Heart left ventricle (tissue), 16 donors: ENCODE measurements at regions of chr22 and their contacts with region 1.

Region 1: DNA sequence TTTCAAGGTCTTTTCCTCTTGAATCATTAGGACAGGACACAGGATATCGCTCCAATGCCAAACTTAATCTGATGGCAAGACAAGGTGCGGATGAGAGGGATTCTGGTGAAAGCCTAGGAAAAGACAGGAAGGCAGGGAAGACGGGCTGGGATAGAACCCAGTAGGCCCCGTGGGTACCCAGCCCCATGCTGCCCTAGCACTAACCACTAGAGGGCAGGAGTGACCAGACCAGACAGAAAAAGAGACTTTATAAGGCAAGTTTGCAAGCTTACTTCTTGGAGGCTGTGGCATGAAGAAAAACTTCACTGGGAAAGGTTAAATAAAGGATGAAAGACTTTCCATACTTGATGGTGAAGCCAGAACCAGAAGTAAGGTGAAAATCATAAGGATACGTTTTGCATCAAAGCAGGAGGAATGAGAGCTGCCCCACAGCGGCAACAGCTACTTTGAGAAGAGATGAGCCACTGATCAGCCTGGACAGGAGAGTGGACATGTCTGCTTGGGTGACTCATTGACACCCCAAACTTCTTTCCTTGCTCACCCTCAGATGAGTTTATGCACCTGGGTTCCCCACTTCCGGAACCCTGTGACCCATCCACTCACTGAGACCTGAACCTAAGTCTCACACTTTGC is 39.8 kb downstream of the SYN3 start:
- DNase-seq: peak in 4 of 5 donors; percentile 39 to 53 (median 44)
- ATAC-seq: peak in 3 of 4 donors; percentile 67 to 83 (median 75)
- H3K4me3 ChIP-seq: no peak overlapping the region
- H3K27ac ChIP-seq: no peak overlapping the region
- H3K4me1 ChIP-seq: peaks cover 0 to 2% (median 0%) of the 10 kb centered on the region in 12 donors
- H3K27me3 ChIP-seq: peaks cover 0 to 6% (median 0%) of the 10 kb centered on the region in 9 donors
- CTCF ChIP-seq: peak; percentile 83 to 92 (median 86)
- POLR2A ChIP-seq: no peak

Region 2: GRCh38 chr22:33049119-33049729 is 30.9 kb after region 1 on chr22:
- intact Hi-C with region 1: loop called in 2 of 10 experiments (anchors 2 kb)
- DNase-seq: peak in 4 of 5 donors; percentile 71 to 82 (median 75)
- ATAC-seq: peak in 3 of 4 donors; percentile 73 to 86 (median 79)
- H3K4me3 ChIP-seq: no peak overlapping the region
- H3K27ac ChIP-seq: no peak overlapping the region
- H3K4me1 ChIP-seq: peaks cover 0 to 5% (median 0%) of the 10 kb centered on the region in 12 donors
- H3K27me3 ChIP-seq: peaks cover 0 to 28% (median 13%) of the 10 kb centered on the region in 9 donors
- CTCF ChIP-seq: peak; percentile 78 to 97 (median 88)
- POLR2A ChIP-seq: no peak

Region 3: GRCh38 chr22:33202455-33202854 is 184.1 kb after region 1 on chr22:
- intact Hi-C with region 1: loop called in 9 of 10 experiments (anchors 1 to 5 kb)
- DNase-seq: no peak
- ATAC-seq: no peak
- H3K4me3 ChIP-seq: no peak overlapping the region
- H3K27ac ChIP-seq: no peak overlapping the region
- H3K4me1 ChIP-seq: peaks cover 0 to 3% (median 0%) of the 10 kb centered on the region in 12 donors
- H3K27me3 ChIP-seq: peaks cover 0 to 12% (median 0%) of the 10 kb centered on the region in 9 donors
- CTCF ChIP-seq: no peak
- POLR2A ChIP-seq: no peak

Region 4: DNA sequence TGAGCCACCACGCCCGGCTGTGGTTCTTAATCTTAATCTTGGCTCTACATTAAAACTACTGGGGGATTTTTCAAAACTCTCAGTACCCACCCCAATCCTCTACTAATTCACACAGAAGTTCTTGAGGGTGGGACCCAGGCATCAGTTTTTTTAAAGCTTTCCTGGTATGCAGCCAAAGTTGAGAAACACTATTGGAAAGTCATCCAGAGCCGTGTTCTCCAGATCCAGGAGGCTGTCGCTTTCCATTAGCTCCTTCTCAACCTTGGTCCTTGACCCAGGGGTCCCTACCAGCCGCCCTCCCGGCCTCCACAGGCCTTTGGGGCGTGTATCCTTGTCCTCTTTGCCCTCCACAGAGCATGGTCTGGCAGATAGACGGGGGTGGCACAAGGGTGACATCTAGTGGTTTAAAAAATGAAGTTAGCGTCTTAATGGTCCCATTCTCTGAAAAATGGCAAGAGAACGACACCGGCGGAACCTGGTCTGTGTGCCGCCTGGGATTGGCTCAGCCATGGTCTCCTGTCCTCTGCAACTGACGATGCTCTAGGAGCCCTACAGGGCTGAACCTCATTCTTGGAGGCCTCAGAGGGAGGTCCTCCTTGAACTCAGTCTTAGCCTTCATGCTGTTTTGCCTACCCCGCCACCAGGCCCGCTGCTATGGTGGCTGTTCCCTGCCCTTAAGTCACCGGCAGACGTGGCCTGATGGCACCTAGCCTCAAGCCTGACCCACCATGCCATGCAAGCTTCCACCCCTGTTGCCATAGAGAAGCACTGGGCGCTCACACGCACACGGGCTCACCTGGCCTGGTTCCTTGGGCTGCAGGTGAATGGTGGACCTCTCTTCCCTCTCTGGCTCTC is 191.8 kb after region 1 on chr22:
- intact Hi-C with region 1: loop called in 2 of 10 experiments (anchors 5 kb)
- DNase-seq: no peak
- ATAC-seq: peak in 3 of 4 donors; percentile 59 to 80 (median 78)
- H3K4me3 ChIP-seq: no peak overlapping the region
- H3K27ac ChIP-seq: no peak overlapping the region
- H3K4me1 ChIP-seq: peaks cover 0 to 6% (median 0%) of the 10 kb centered on the region in 12 donors
- H3K27me3 ChIP-seq: peaks cover 0 to 4% (median 0%) of the 10 kb centered on the region in 9 donors
- CTCF ChIP-seq: peak; percentile 22 to 63 (median 46)
- POLR2A ChIP-seq: no peak